ENCODE measurements at regions of chr7 and their contacts with region 1.

Region 1: DNA sequence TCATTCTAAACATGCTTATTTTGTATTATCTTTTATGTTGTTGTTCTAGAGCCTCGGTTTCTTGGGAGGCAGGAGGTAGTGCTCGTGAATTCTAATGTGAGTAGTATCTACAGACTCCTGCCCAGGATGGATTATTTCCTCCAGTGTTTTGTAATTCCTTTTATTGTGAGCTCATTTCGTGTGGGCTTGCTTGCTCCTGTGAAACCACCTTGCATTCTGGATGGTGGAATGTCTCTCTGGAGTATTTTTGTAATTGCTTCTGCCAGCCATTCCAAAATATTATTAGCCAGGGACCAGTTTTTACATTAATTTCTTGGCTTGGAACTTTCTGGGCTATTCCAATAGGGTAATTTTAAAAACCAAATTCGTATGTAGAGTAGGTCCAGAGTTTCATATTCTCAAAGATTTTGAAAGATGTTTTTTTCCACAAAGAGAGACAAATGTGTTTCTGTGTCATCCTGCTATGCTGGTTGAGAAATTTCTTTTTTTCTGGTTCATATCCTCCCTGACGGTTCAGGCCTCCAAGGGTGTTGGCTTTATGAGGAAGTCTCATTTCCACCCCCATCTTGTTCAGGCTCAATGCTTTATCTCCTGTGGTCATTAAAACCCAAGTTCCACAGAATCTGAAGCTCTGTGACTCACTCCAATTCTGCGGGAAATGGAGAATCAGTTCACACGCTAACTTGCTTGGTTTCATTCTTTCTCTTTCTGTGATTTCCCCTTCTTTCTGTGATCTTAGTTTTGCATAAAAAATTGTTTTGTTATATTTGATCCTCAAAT is 41.7 kb upstream of the CALD1 start:
- DNase-seq: peak; percentile 65
- H3K4me3 Mint-ChIP-seq: no peak overlapping the region
- H3K27ac Mint-ChIP-seq: peak overlapping the region; percentile 88
- H3K4me1 Mint-ChIP-seq: peaks cover 41% of the 10 kb centered on the region
- H3K27me3 Mint-ChIP-seq: no peaks in the 10 kb centered on the region

Region 2: GRCh38 chr7:133936074-133936473 is 801.7 kb before region 1 on chr7:
- CTCF ChIA-PET with region 1: no interaction called
- POLR2A ChIA-PET with region 1: no interaction called
- intact Hi-C with region 1: no loop called
- DNase-seq: no peak
- H3K4me3 Mint-ChIP-seq: no peak overlapping the region
- H3K27ac Mint-ChIP-seq: no peak overlapping the region
- H3K4me1 Mint-ChIP-seq: no peaks in the 10 kb centered on the region
- H3K27me3 Mint-ChIP-seq: no peaks in the 10 kb centered on the region

Region 3: DNA sequence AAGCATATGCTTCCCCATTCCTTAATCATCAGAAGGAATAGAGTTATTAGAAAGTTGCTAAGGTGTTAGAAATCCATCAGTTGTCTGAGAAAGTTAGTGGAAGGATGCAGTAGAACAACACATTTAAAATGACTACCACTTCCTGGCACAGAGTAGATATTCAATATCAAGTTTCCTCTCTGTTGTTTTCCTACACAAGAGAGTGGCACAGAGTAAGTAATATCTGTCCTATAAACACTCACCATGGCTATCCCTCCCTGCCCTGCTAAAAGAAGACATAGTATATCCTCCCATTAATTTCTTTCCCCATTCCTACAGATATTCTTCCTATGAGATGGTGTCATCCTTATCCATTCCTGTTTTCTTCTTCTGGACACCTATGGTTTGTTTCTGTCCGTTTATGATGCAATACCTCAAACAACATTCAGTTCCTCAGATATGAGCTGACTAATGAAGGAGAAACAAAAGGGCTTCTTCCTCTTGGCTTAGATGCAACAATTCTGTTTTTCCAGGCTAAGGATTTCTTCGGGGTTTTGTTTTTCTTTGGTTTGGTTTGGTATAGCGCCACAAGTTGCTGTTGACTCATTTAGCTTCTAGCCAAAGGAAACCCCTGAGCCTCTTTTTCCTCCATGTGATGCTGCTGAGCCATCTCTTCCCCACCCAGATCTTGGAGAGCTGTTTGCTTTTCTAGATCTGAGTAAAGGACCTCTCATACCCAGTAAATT is 124.0 kb before region 1 on chr7:
- CTCF ChIA-PET with region 1: no interaction called
- POLR2A ChIA-PET with region 1: no interaction called
- intact Hi-C with region 1: loop called (anchors 1 kb)
- DNase-seq: peak; percentile 61
- H3K4me3 Mint-ChIP-seq: no peak overlapping the region
- H3K27ac Mint-ChIP-seq: no peak overlapping the region
- H3K4me1 Mint-ChIP-seq: peaks cover 12% of the 10 kb centered on the region
- H3K27me3 Mint-ChIP-seq: peaks cover 15% of the 10 kb centered on the region

Region 4: GRCh38 chr7:134669845-134670373 is 67.8 kb before region 1 on chr7:
- CTCF ChIA-PET with region 1: no interaction called
- POLR2A ChIA-PET with region 1: no interaction called
- intact Hi-C with region 1: loop called (anchors 1 kb)
- DNase-seq: peak; percentile 87
- H3K4me3 Mint-ChIP-seq: peak overlapping the region; percentile 27
- H3K27ac Mint-ChIP-seq: peak overlapping the region; percentile 74
- H3K4me1 Mint-ChIP-seq: peaks cover 48% of the 10 kb centered on the region
- H3K27me3 Mint-ChIP-seq: no peaks in the 10 kb centered on the region

Region 5: GRCh38 chr7:134750083-134751062 is 12.6 kb after region 1 on chr7:
- CTCF ChIA-PET with region 1: interaction called, 9 read pairs
- POLR2A ChIA-PET with region 1: no interaction called
- intact Hi-C with region 1: loop called (anchors 1 kb)
- DNase-seq: peak; percentile 83
- H3K4me3 Mint-ChIP-seq: no peak overlapping the region
- H3K27ac Mint-ChIP-seq: no peak overlapping the region
- H3K4me1 Mint-ChIP-seq: peaks cover 11% of the 10 kb centered on the region
- H3K27me3 Mint-ChIP-seq: no peaks in the 10 kb centered on the region

Region 6: DNA sequence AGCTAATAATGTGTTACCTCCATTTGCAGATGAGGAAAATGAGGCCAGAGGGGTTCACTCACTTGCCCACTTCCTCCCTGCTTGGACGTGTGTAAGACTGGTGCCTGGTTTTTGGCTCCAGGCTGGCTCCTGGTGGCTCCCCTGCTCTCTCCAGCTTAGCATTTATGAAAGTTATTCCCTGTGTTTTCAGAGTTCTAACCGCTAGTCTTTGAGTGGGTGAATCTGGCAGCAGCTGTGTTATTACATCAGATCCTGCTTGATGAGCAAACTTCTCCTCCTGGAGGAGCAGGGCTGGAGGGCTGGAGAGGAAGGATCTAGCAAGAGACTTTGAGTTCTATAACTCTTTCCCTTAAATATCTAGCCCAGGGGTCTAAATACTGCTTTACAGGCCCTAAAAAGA is 167.6 kb after region 1 on chr7:
- CTCF ChIA-PET with region 1: no interaction called
- POLR2A ChIA-PET with region 1: no interaction called
- intact Hi-C with region 1: loop called (anchors 1 kb)
- DNase-seq: no peak
- H3K4me3 Mint-ChIP-seq: no peak overlapping the region
- H3K27ac Mint-ChIP-seq: no peak overlapping the region
- H3K4me1 Mint-ChIP-seq: peaks cover 12% of the 10 kb centered on the region
- H3K27me3 Mint-ChIP-seq: no peaks in the 10 kb centered on the region

Measured in activated CD4-positive, alpha-beta memory T cell treated with anti-CD3 and anti-CD28 coated beads for 36 hours (primary cell).